PC-3 (cell line): ENCODE measurements at regions of chr12 and their contacts with region 1.

Region 1: DNA sequence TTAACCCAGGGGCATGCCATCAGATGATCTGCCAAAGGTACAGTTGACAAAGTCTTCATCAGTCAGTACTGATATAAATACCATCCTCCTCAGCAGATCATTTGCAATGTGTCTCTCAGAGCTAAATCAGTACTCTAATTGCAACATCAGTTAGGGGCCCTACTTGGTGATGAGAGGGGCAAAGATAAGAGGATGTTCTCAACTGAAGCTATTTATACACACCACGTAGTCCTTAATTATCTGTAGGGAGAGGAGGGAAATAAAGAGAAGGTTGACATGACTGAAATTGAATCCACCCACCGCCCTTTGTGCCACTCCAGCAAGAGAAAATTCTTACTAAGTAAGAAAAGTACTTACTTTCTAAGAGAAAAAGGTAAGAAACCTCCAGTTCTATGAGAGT is 157.8 kb upstream of the NUDT4 start:
- DNase-seq: no peak
- ATAC-seq: no peak
- H3K4me3 ChIP-seq: no peak overlapping the region
- H3K27ac ChIP-seq: no peak overlapping the region
- H3K4me1 ChIP-seq: peaks cover 20% of the 10 kb centered on the region
- H3K27me3 ChIP-seq: no peaks in the 10 kb centered on the region
- CTCF ChIP-seq: no peak

Region 2: GRCh38 chr12:93146263-93146939 is 73.5 kb before region 1 on chr12:
- CTCF ChIA-PET with region 1: no interaction called
- POLR2A ChIA-PET with region 1: no interaction called
- intact Hi-C with region 1: no loop called
- DNase-seq: peak; percentile 35
- ATAC-seq: no peak
- H3K4me3 ChIP-seq: no peak overlapping the region
- H3K27ac ChIP-seq: no peak overlapping the region
- H3K4me1 ChIP-seq: peaks cover 27% of the 10 kb centered on the region
- H3K27me3 ChIP-seq: no peaks in the 10 kb centered on the region
- CTCF ChIP-seq: no peak

Region 3: GRCh38 chr12:93205361-93205760 is 14.6 kb before region 1 on chr12:
- CTCF ChIA-PET with region 1: interaction called, 15 read pairs
- POLR2A ChIA-PET with region 1: interaction called, 3 read pairs
- intact Hi-C with region 1: no loop called
- DNase-seq: no peak
- ATAC-seq: no peak
- H3K4me3 ChIP-seq: no peak overlapping the region
- H3K27ac ChIP-seq: no peak overlapping the region
- H3K4me1 ChIP-seq: no peaks in the 10 kb centered on the region
- H3K27me3 ChIP-seq: no peaks in the 10 kb centered on the region
- CTCF ChIP-seq: no peak

Region 4: DNA sequence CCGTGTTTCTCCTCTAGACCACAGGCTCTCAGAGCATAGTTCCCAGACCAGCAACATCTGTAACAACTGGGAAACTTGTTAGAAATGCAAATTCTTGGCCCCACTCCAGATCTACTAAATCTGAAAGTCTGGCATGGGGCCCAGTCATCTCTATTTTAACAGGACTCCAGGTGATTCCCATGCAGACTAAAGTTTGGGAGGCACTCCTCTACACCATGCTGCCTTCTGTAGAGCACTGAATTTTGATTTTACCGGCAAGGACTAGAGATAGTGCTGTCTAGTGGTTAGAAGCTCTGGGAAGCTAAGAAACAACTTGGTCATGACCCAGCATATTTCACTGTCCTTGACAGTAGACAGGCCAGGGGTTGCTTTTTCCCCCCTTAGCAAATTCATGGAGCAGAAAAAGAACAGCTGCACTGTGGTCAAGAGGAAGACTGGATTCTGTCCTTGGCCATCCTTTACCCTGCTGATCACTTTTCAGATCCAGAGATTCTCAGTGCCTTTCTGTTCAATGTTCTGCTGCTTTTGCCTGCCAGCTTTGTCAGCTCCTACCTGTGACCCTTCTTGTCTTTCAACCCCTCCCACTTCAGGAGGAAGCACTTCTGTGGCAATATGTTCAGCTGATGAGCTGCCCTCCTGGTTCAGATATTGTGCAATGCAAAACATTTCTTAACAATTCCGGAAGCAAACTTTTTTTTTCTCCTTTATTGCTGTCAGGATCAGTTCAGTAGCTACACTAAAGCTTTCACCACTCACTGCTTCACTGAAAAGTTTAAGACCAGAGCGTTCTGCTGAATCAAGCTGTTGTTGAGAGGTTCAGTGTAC is 24.0 kb after region 1 on chr12:
- CTCF ChIA-PET with region 1: no interaction called
- POLR2A ChIA-PET with region 1: no interaction called
- intact Hi-C with region 1: no loop called
- DNase-seq: peak; percentile 41
- ATAC-seq: no peak; the same call in 1 of the 2 replicates
- H3K4me3 ChIP-seq: no peak overlapping the region
- H3K27ac ChIP-seq: no peak overlapping the region
- H3K4me1 ChIP-seq: no peaks in the 10 kb centered on the region
- H3K27me3 ChIP-seq: no peaks in the 10 kb centered on the region
- CTCF ChIP-seq: no peak

Region 5: GRCh38 chr12:93514853-93515252 is 294.9 kb after region 1 on chr12:
- CTCF ChIA-PET with region 1: no interaction called
- POLR2A ChIA-PET with region 1: no interaction called
- intact Hi-C with region 1: no loop called
- DNase-seq: peak; percentile 79
- ATAC-seq: peak; percentile 92
- H3K4me3 ChIP-seq: no peak overlapping the region
- H3K27ac ChIP-seq: no peak overlapping the region
- H3K4me1 ChIP-seq: peaks cover 17% of the 10 kb centered on the region
- H3K27me3 ChIP-seq: no peaks in the 10 kb centered on the region
- CTCF ChIP-seq: no peak

Region 6: GRCh38 chr12:93591137-93591868 is 371.4 kb after region 1 on chr12:
- CTCF ChIA-PET with region 1: no interaction called
- POLR2A ChIA-PET with region 1: no interaction called
- intact Hi-C with region 1: no loop called
- DNase-seq: peak; percentile 68
- ATAC-seq: peak; percentile 95
- H3K4me3 ChIP-seq: peak overlapping the region; percentile 83
- H3K27ac ChIP-seq: peak overlapping the region; percentile 44
- H3K4me1 ChIP-seq: no peaks in the 10 kb centered on the region
- H3K27me3 ChIP-seq: no peaks in the 10 kb centered on the region
- CTCF ChIP-seq: no peak